Mammary epithelial cell (primary cell): ENCODE measurements at regions of chr21 and their contacts with region 1.

Region 1: GRCh38 chr21:29091032-29091431 is 17.6 kb upstream of the CCT8 start:
- DNase-seq: peak; percentile 68
- H3K4me3 ChIP-seq: no peak overlapping the region
- H3K27ac ChIP-seq: no peak overlapping the region
- H3K4me1 ChIP-seq: peaks cover 16% of the 10 kb centered on the region
- H3K27me3 ChIP-seq: no peaks in the 10 kb centered on the region
- CTCF ChIP-seq: no peak

Region 2: DNA sequence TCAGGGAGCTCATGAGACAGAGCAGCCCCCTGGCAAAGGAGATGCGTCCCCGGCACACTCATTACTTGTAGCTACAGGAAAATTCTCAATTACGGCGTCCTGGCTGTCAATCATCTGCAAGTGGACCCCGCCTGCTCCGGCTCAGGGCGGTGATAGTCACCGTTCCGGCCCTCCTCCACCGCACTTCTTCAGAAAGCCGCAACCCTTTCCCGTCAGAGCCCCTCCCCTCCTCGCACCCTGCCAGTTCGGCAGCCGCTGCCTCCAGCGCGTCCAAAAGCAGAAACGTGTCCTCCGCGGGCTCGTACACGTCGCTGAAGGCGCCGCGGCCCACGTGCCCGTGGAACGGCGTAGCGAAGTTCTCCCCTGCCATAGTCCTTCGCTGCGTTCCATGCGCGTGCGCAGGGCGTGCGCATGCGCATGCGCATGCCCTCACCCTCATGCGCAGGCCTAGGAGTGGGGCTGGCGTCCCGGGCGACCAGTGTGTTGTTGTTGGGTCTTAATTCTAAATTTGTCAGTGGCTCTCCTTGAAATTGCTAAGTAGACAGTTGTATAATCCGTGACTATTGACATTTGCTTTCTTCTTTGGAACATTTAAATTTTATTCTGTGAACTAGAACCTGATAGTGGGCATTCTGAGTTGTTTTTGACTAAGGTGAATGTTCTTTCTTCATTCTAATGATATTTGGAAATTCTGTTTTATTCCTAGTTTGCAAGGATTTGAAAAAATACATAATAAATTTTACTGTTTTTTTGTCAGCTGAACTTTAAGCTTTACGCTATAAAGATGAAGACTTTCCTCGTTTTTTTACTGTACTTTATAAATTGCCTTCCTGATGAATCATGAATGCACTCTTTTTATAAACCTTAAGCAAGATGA is 205.8 kb before region 1 on chr21:
- CTCF ChIA-PET with region 1: no interaction called
- dilution Hi-C with region 1: no loop called
- in situ Hi-C with region 1: no loop called
- intact Hi-C with region 1: no loop called
- DNase-seq: peak; percentile 89
- H3K4me3 ChIP-seq: peak overlapping the region; percentile 72 to 98 (median 79)
- H3K27ac ChIP-seq: peak overlapping the region; percentile 80
- H3K4me1 ChIP-seq: peaks cover 5% of the 10 kb centered on the region
- H3K27me3 ChIP-seq: no peaks in the 10 kb centered on the region
- CTCF ChIP-seq: no peak

Region 3: DNA sequence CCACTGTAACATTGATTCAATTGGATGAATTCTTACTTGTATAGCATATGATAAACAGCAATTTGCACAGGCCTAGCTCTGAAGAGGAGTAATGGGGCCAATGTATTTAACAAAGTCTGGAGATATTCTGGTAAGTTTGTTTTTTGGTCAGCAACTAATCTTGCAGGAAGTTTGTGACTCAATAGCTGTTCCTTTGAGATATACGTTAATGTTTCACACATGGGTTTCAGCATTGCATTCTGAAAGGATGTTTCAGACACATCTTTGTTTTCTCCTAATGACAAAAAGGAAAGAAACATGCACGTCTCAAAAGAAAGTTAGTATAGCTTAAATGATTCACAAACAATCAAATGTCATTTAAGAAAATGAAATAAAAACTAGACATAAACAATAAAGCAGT is 147.4 kb before region 1 on chr21:
- CTCF ChIA-PET with region 1: no interaction called
- dilution Hi-C with region 1: no loop called
- in situ Hi-C with region 1: no loop called
- intact Hi-C with region 1: no loop called
- DNase-seq: no peak
- H3K4me3 ChIP-seq: no peak overlapping the region
- H3K27ac ChIP-seq: no peak overlapping the region
- H3K4me1 ChIP-seq: no peaks in the 10 kb centered on the region
- H3K27me3 ChIP-seq: no peaks in the 10 kb centered on the region
- CTCF ChIP-seq: no peak

Region 4: DNA sequence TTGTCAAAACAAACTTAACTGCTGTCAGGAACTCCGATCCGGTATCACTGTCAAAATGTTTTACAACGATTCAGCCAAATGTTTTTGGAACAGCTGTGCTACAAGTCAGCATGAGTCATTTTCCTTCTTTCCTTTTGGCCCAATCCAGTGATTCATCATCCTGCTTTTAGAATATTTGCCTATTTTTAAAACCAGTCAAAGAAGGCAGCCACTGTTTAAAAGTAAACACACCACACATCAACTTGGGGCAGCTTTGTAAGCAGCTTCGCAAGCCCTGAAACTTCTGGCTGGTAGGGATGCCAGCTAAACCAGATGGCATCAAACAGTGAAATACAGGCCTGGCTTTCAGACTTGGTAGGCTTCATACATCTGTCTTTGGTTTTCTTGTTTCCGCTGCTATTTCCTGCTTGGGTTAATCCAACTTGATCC is 54.3 kb after region 1 on chr21:
- CTCF ChIA-PET with region 1: no interaction called
- dilution Hi-C with region 1: loop called (anchors 5 kb)
- in situ Hi-C with region 1: no loop called
- intact Hi-C with region 1: loop called (anchors 1 kb)
- DNase-seq: peak; percentile 93
- H3K4me3 ChIP-seq: peak overlapping the region in 2 of 3 experiments; percentile 31
- H3K27ac ChIP-seq: peak overlapping the region; percentile 91
- H3K4me1 ChIP-seq: peaks cover 53% of the 10 kb centered on the region
- H3K27me3 ChIP-seq: no peaks in the 10 kb centered on the region
- CTCF ChIP-seq: no peak

Region 5: GRCh38 chr21:29343519-29343918 is 252.5 kb after region 1 on chr21:
- CTCF ChIA-PET with region 1: no interaction called
- dilution Hi-C with region 1: no loop called
- in situ Hi-C with region 1: no loop called
- intact Hi-C with region 1: loop called (anchors 1 kb)
- DNase-seq: no peak
- H3K4me3 ChIP-seq: no peak overlapping the region
- H3K27ac ChIP-seq: no peak overlapping the region
- H3K4me1 ChIP-seq: peaks cover 45% of the 10 kb centered on the region
- H3K27me3 ChIP-seq: no peaks in the 10 kb centered on the region
- CTCF ChIP-seq: no peak

Region 6: DNA sequence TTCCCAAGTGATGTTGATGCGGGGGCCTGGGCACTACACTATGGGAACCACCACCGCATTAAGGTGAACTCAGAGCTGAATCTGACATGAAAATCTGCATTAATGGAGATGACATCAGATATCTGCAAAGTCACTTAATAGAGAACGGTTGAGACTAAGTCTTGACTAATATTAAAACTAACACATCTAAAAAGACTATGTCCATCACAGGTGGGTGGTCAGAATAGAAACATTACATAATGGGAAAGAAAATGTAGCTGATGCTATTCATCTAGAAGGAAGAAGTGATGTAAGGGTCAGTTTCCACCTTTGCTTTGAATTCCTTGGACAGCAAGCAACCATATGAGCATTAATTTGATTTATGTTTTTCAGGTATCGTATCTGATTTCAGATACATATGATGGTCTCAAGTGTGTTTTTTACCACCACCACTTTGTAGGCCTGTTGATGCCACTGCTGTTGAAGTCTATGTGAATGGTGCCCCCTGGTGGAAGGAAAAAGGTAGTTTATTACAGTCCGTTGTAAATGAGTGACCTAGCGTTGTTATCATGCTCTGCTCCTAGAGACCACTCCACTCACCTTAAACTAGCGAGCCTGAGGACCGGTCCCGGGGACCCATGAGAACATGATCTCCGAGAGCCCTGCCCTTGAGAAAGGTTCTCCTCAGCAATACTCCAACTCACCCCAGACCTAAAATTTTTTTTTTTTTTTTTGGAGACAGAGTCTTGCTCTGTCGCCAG is 281.2 kb after region 1 on chr21:
- CTCF ChIA-PET with region 1: no interaction called
- dilution Hi-C with region 1: no loop called
- in situ Hi-C with region 1: loop called (anchors 10 kb)
- intact Hi-C with region 1: loop called (anchors 1 kb)
- DNase-seq: peak; percentile 52
- H3K4me3 ChIP-seq: no peak overlapping the region
- H3K27ac ChIP-seq: no peak overlapping the region
- H3K4me1 ChIP-seq: no peaks in the 10 kb centered on the region
- H3K27me3 ChIP-seq: no peaks in the 10 kb centered on the region
- CTCF ChIP-seq: peak; percentile 56 to 72

Region 7: GRCh38 chr21:29499734-29500343 is 408.8 kb after region 1 on chr21:
- CTCF ChIA-PET with region 1: no interaction called
- dilution Hi-C with region 1: no loop called
- in situ Hi-C with region 1: no loop called
- intact Hi-C with region 1: loop called (anchors 1 kb)
- DNase-seq: peak; percentile 51
- H3K4me3 ChIP-seq: no peak overlapping the region
- H3K27ac ChIP-seq: no peak overlapping the region
- H3K4me1 ChIP-seq: no peaks in the 10 kb centered on the region
- H3K27me3 ChIP-seq: no peaks in the 10 kb centered on the region
- CTCF ChIP-seq: peak; percentile 67 to 78

Region 8: DNA sequence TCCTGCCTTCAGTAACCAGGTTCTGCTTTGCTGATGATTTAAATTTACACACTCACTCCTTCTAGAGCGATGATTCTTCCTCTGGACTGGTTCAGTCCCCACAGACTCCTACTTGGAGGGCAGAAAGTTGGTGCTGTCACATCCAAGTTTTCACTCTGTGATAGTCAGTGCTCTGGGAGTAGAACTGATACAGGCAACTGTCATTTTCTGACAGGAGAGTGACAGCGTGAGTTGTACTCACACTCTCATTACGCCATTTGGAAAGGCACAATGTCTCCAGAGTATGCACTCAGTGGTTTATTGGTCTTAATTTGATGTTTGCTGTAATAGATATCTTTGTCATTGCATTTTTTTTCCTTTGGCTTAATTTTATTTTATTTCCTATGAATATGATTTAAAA is 752.8 kb after region 1 on chr21:
- CTCF ChIA-PET with region 1: no interaction called
- dilution Hi-C with region 1: no loop called
- in situ Hi-C with region 1: loop called in 1 of 2 experiments (anchors 25 kb)
- intact Hi-C with region 1: loop called (anchors 5 kb)
- DNase-seq: no peak
- H3K4me3 ChIP-seq: no peak overlapping the region
- H3K27ac ChIP-seq: no peak overlapping the region
- H3K4me1 ChIP-seq: no peaks in the 10 kb centered on the region
- H3K27me3 ChIP-seq: no peaks in the 10 kb centered on the region
- CTCF ChIP-seq: no peak